Activated CD4-positive, alpha-beta memory T cell treated with anti-CD3 and anti-CD28 coated beads, Interleukin-2, amount 10 ng/mL, durations not matched to agents 7 days and 5 days (primary cell): ENCODE measurements at regions of chr2 and their contacts with region 1.

Region 1: GRCh38 chr2:190534310-190535120 is at the start of gene NEMP2:
- DNase-seq: peak; percentile 83
- H3K4me3 Mint-ChIP-seq: peak within 1 kb of the TSS; percentile 89
- H3K27ac Mint-ChIP-seq: peak within 1 kb of the TSS; percentile 99
- H3K4me1 Mint-ChIP-seq: peaks cover 55% of the 10 kb centered on the region
- H3K27me3 Mint-ChIP-seq: no peaks in the 10 kb centered on the region
- total RNA-seq, gene NEMP2: 18.9 to 19.1 TPM

Region 2: DNA sequence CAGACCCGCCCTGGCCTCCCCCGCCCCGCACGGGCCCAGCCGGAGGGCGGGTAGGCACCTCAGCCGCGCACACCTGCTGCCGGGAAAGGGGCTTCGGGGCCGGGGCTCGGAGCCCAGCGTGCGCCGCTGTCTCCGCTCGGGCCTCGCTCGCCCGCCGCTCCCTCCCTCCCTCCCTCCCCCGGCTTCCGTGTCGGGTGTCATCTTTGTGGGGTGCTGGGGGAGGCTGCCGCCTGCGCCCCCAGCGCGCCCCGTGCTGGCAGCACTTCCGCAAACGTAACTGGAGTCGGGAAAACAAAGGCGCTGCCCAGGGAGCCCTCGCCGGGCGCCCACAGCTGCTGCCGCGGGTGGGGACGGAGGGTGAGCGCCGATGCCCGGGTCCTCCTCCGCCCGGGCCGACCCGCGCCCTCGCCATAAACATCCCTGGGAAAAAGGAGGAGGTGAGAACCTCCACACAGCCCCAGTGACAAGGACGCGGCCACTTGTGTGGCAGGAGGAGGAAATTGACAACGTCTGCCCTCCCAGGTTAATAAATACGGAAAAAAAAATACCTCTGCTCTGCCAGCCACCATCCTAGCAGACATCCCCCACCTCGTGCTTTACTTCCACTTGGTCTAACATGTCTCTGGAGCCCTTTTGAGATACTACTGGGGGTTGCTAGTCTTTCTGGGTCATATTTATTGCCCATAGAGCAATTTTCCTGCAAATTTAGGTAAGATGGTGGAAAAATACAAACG is 125.8 kb before region 1 on chr2:
- CTCF ChIA-PET with region 1: no interaction called
- POLR2A ChIA-PET with region 1: interaction called, 43 read pairs
- DNase-seq: peak; percentile 76
- H3K4me3 Mint-ChIP-seq: peak overlapping the region; percentile 84
- H3K27ac Mint-ChIP-seq: peak overlapping the region; percentile 88
- H3K4me1 Mint-ChIP-seq: peaks cover 38% of the 10 kb centered on the region
- H3K27me3 Mint-ChIP-seq: no peaks in the 10 kb centered on the region

Region 3: DNA sequence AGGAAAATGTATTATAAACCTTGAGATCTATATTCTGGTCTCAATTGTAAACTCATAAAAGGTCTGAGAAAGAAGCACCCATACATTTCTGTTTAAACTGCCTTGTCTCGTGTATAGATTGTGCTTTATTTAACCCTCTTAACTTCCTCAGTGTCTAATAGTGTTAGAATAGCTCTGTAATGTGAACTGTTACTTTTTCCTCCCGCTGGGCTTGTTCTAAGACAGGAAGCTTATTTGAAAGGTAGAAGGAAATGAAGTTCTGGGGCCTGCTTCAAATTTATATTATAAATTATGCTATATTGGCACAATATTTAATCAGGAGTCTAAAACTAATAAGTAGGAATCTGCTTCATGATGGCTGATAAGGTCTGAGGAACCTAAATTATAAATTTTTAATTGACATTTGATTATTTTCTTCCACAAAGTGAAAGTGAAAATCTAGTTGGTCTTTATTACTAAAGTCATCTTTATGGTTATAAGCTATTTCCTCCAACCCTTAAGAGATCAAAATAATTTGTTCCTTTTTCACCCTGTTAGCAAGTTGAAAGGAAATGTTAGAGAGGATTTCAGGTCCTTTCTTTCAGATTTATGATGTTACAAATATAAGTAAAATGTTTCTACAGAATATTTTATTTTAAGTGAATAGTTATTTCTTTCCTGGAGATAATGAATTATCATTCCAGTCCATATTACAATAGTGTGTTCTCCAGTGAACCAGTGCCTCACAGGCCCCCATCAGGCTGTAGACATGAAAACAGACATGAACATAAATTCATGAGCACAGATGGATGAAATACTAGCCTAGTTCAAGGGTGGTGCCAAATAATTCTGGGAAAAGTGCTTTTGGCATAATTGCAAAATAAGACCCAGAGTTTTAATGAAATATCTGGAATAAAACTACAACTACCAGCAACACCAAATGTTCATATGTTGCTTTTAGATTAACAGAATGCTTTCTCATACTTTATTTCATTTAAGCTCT is 118.4 kb before region 1 on chr2:
- CTCF ChIA-PET with region 1: no interaction called
- POLR2A ChIA-PET with region 1: interaction called, 25 read pairs
- DNase-seq: no peak
- H3K4me3 Mint-ChIP-seq: peak overlapping the region; percentile 63
- H3K27ac Mint-ChIP-seq: peak overlapping the region; percentile 79
- H3K4me1 Mint-ChIP-seq: peaks cover 33% of the 10 kb centered on the region
- H3K27me3 Mint-ChIP-seq: no peaks in the 10 kb centered on the region

Region 4: DNA sequence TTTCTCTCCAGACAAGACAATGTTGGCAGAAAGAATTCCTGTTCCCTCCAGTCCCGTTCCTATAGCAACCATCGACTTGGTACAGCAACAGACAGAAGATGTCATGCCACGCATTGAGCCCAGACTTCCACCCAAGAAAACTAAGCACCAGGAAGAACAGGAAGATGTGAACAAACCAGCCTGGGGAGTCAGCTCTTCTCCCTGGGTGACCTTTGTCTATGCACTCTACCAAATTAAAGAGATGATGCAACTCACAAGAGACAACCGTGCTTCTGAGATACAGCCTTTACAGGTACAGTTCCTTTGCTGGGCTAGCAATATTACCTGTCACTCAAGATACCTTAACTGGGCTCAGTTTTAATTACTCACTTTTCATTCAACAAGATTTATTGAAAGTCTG is 37.1 kb before region 1 on chr2:
- CTCF ChIA-PET with region 1: no interaction called
- POLR2A ChIA-PET with region 1: no interaction called
- DNase-seq: no peak
- H3K4me3 Mint-ChIP-seq: no peak overlapping the region
- H3K27ac Mint-ChIP-seq: peak overlapping the region; percentile 57
- H3K4me1 Mint-ChIP-seq: peaks cover 22% of the 10 kb centered on the region
- H3K27me3 Mint-ChIP-seq: no peaks in the 10 kb centered on the region

Region 5: GRCh38 chr2:190515687-190516086 is 18.8 kb before region 1 on chr2:
- CTCF ChIA-PET with region 1: interaction called, 3 read pairs
- POLR2A ChIA-PET with region 1: interaction called, 29 read pairs
- DNase-seq: no peak
- H3K4me3 Mint-ChIP-seq: no peak overlapping the region
- H3K27ac Mint-ChIP-seq: peak overlapping the region; percentile 54
- H3K4me1 Mint-ChIP-seq: peaks cover 28% of the 10 kb centered on the region
- H3K27me3 Mint-ChIP-seq: no peaks in the 10 kb centered on the region

Region 6: DNA sequence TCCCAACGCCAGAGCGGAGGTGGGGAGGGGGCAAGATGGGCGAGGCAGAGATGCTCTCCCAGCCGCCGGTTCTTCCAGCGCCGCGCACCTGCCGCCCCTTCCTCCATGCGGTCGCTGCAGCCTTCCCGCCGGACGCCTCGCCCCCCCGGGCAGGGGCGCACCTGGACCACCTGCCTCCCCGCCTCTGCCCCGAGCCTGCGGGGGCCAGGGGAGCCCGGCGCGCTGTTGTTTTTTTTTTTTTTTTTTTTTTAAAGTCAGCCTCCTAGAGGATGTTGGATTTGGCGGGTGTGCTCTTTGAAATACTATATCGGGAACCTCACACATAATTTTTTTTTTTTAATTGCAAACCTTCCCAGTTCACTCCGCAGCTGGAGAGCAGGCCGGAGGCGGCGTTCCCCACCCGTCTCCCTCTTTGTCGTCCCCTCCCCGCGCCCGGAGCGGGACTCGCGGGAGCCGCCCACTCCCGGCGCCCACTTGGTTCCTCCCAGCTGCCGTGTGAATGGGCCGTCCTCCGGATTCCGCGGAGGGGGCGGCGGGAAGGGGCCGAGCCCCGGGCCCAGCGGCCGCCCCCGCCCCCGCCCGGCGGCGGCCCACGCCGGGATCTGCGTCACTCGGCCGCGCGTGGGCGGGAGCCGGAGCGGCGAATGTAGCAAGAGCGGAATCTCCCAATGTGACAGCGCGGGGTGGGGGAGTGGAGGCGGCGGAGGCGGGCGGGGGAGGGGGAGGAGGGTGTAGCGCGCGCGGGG is 113.9 kb after region 1 on chr2:
- CTCF ChIA-PET with region 1: interaction called, 3 read pairs
- POLR2A ChIA-PET with region 1: interaction called, 10 read pairs
- DNase-seq: peak; percentile 81
- H3K4me3 Mint-ChIP-seq: peak overlapping the region; percentile 73
- H3K27ac Mint-ChIP-seq: peak overlapping the region; percentile 29
- H3K4me1 Mint-ChIP-seq: peaks cover 31% of the 10 kb centered on the region
- H3K27me3 Mint-ChIP-seq: peaks cover 2% of the 10 kb centered on the region